ENCODE measurements at regions of chr6 and their contacts with region 1.

Region 1: GRCh38 chr6:135411339-135411738 is 86.2 kb downstream of the AHI1 start:
- DNase-seq: peak in 1 of 2 experiments; percentile 2
- H3K4me3 ChIP-seq: no peak overlapping the region
- H3K4me3 Mint-ChIP-seq: no peak overlapping the region
- H3K27ac Mint-ChIP-seq: no peak overlapping the region
- H3K4me1 ChIP-seq: no peaks in the 10 kb centered on the region
- H3K4me1 Mint-ChIP-seq: no peaks in the 10 kb centered on the region
- H3K27me3 ChIP-seq: no peaks in the 10 kb centered on the region
- H3K27me3 Mint-ChIP-seq: no peaks in the 10 kb centered on the region
- CTCF ChIP-seq: peak; percentile 43 to 44

Region 2: DNA sequence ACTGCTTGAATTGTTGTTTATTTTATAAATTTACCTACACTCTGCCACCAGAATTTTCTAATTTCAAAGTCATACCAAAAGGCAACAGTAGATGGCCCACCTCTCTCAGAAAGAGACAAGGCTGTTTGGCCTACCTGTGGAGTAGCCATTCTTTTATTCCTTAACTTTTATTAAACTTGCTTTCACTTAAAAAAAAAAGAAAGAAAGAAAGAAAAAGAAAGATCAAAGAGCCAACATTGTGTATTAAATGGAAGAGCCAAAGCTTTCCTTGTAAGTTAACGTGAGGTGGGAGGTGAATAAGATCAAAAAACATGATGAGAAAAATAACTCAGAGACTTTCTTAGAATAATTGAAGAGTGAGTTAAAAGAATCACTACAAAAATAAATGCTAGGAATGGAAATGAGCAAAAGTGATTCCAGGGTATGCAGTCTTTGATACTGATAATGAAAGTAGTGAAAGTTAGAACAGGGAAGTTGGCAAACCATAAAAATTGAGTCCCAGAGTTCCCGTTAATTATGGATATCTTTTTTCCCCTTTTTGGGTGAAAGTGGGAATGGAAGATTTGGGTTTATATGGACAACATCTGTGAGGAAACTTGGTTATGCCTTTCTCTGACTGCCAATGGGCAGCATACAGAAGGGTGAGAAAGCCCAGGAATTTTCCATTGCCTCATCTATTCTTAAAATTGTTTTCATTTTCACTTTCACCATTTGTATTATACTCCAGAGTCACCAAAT is 266.1 kb before region 1 on chr6:
- CTCF ChIA-PET with region 1: interaction called, 3 read pairs
- POLR2A ChIA-PET with region 1: no interaction called
- intact Hi-C with region 1: loop called (anchors 1 kb)
- DNase-seq: peak in 1 of 2 experiments; percentile 30
- H3K4me3 ChIP-seq: no peak overlapping the region
- H3K4me3 Mint-ChIP-seq: no peak overlapping the region
- H3K27ac Mint-ChIP-seq: no peak overlapping the region
- H3K4me1 ChIP-seq: no peaks in the 10 kb centered on the region
- H3K4me1 Mint-ChIP-seq: no peaks in the 10 kb centered on the region
- H3K27me3 ChIP-seq: no peaks in the 10 kb centered on the region
- H3K27me3 Mint-ChIP-seq: no peaks in the 10 kb centered on the region
- CTCF ChIP-seq: peak; percentile 48 to 57